Activated CD4-positive, alpha-beta T cell treated with anti-CD3 and anti-CD28 coated beads for 36 hours (primary cell): ENCODE measurements at regions of chr16 and their contacts with region 1.

Region 1: GRCh38 chr16:19760356-19761060 is 42.4 kb downstream of the IQCK start:
- DNase-seq: no peak
- ATAC-seq: no peak
- H3K4me3 Mint-ChIP-seq: no peak overlapping the region
- H3K27ac Mint-ChIP-seq: no peak overlapping the region
- H3K4me1 Mint-ChIP-seq: no peaks in the 10 kb centered on the region
- H3K27me3 Mint-ChIP-seq: no peaks in the 10 kb centered on the region

Region 2: DNA sequence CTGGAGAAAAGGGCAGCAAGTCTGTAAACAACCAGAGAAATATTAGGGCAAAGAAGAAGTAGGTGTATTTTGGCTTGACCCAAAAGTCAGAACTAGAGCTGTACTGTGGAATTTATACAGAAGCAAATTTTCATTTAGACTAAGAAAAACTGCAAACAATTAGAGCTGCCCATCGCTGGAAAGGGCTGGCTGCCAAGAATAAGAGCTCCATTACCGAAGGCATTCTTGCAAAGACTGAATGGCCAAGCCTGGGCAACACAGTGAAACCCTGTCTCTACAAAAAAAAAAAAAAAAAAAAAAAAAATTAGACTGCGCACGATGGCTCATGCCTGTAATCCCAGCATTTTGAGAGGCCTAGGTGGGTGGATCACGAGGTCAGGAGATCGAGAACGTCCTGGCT is 396.8 kb before region 1 on chr16:
- CTCF ChIA-PET with region 1: no interaction called
- POLR2A ChIA-PET with region 1: no interaction called
- intact Hi-C with region 1: no loop called
- DNase-seq: no peak
- ATAC-seq: no peak
- H3K4me3 Mint-ChIP-seq: no peak overlapping the region
- H3K27ac Mint-ChIP-seq: no peak overlapping the region
- H3K4me1 Mint-ChIP-seq: no peaks in the 10 kb centered on the region
- H3K27me3 Mint-ChIP-seq: peaks cover 3% of the 10 kb centered on the region

Region 3: GRCh38 chr16:19817122-19817521 is 56.6 kb after region 1 on chr16:
- CTCF ChIA-PET with region 1: no interaction called
- POLR2A ChIA-PET with region 1: no interaction called
- intact Hi-C with region 1: loop called in 1 of 2 experiments (anchors 5 kb)
- DNase-seq: no peak
- ATAC-seq: no peak
- H3K4me3 Mint-ChIP-seq: no peak overlapping the region
- H3K27ac Mint-ChIP-seq: no peak overlapping the region
- H3K4me1 Mint-ChIP-seq: no peaks in the 10 kb centered on the region
- H3K27me3 Mint-ChIP-seq: no peaks in the 10 kb centered on the region